GM13977 (cell line): ENCODE measurements at regions of chr10 and their contacts with region 1.

Region 1: GRCh38 chr10:23314835-23315239 is 29.8 kb downstream of the C10orf67 start:
- DNase-seq: peak; percentile 39
- CTCF ChIP-seq: peak; percentile 69

Region 2: GRCh38 chr10:22148961-22149360 is 1165.9 kb before region 1 on chr10:
- in situ Hi-C with region 1: no loop called
- DNase-seq: no peak
- CTCF ChIP-seq: no peak

Region 3: DNA sequence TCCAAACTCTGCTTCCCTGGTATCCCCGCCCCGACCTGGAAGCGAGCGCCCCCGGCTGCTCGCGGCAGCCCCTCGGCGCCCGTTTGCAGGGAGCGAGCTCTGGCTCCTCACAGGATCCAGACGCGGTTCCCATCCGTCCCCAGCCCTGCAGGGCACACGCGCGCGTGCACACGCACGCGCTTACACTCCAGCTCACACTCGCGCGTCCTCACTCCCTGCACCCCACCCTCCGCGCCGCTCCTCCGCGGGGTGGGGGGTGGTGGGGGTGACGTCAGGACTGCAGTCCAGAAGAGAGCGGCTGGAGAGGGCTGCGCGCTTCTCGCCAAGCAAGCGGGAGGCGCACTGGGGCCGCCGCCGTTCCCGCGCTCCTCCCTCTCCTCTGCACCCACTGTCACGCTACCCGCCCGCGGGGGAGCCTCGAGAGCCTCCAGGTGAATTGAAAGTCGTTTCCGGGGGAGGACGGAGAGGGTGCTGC is 379.6 kb after region 1 on chr10:
- in situ Hi-C with region 1: loop called (anchors 25 kb)
- DNase-seq: no peak
- CTCF ChIP-seq: no peak